Posterior cingulate gyrus (tissue), 11 donors: ENCODE measurements at regions of chr17 and their contacts with region 1.

Region 1: DNA sequence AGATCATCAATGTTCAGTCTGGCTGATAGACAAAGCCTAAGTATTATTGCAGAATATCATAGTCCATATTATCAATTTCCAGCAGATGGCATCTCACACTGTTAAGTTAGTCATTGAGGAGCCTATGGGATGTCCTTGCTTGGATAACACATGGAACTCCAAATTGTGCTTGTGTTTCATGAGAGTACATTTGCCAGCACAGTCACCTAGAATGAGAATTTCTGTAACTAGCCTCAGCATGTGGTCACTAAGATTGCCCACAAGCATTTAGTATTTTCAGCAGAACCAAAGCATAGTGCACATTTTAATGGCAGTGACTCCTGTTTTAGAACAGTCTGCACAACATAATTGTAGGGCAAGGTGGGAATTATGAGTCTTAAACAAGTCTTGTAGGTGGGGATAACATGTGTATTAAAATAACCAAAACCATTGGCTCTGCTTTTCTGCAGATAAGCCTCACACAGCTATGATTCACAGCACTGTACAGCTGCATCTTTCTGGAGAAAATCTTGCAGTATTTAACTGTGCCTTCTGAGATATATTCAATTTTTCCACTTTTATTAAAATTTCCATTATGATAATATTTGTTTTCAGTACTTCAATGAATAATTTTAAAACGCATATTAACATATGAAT is 882.8 kb upstream of the SOX9 start:
- DNase-seq: no peak

Region 2: DNA sequence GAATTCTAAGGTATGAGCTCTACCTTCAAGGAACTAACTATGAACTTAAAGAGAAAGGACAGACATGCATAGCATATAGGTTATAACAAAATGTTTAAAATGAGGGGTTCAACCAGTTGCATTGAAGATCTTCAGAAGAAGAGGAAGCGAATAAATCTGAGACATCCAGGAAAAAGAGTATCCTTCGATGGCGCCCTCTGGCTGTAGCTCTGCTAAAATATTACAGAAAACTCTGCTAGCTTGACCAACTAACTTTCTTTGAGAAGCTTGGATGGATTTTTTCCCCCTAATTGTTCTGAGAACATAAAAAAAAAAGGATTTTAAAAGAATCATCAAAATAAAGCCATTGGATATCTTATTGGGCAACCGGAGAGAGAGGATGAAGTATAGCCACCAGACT is 222.9 kb after region 1 on chr17:
- intact Hi-C with region 1: loop called (anchors 5 kb)
- DNase-seq: peak in 4 of 10 donors; percentile 9 to 54 (median 28)